Posterior vena cava (tissue), 2 donors: ENCODE measurements at regions of chr13 and their contacts with region 1.

Region 1: DNA sequence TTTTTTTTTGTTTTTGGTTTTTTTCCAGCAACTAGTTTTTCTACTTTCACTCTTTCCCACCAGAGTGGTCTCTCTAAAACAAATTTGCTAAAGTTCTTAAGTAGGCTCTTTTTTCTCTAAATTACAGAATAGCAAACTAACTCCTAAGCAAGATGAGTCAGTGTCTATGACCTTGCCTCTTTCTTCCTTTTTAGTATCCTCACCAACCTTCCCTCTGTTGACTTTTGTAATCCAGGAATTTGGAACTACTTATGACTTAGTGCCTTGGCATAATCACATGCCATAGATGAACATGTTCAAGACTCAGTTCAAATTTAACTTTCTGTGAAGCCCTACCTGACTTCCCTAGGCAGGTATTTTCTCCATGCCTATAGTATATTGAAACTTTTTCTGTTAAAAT is 32.3 kb upstream of the AKAP11 start:
- DNase-seq: no peak

Region 2: DNA sequence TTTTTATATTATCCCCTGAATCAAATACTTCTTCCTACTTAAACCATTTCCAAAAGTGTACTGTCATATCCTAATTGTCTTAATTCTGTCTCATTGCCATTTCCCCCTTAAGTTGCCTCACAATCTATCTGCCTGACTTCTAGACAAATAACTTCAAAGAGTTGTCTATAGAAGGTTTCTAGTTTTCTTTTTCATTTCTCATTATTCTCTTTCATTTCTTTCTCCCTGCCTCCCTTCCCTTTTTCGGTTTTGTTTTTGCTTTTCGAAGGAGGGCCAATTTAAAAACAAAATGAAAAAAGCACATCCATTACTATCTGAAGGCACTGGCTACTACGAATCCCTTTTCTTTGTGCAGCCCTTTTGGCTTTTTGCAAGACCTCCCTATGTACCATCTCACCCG is 1151.0 kb after region 1 on chr13:
- intact Hi-C with region 1: loop called in 1 of 2 experiments (anchors 5 kb)
- DNase-seq: no peak